CD8-positive, alpha-beta memory T cell (primary cell): ENCODE measurements at regions of chr6 and their contacts with region 1.

Region 1: DNA sequence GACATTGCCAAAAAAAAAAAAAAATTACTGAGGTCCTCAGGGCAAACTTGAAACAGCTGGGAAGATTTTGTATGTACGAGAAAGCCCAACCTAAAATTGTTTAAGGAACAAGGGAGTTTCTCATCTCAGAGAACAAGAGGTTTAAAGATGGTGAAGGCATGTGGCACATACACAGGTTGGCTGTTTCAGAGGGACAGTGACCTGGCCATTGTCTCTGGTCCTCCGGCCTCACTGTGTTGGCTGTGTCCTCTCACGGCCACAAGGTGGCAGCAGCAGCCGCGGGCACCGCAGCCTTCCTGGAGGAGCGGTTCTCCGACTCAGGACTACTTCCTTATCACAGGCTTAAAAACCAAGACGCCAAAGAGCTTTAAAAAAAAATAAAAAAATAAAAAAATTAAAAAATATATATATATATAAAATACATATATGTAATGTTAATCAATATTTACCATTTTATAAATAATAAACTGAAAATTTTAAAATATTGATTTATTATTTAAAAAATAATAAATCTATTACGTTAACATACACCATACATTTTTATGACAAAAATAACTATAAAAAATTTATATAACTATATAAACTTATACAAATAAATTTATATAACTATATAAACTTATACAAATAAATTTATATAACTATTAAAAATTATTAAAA is 52.8 kb downstream of the GTF2H5 start:
- DNase-seq: peak; percentile 60 to 84 (median 65)
- H3K4me3 ChIP-seq: no peak overlapping the region
- H3K4me3 Mint-ChIP-seq: no peak overlapping the region
- H3K27ac ChIP-seq: no peak overlapping the region
- H3K27ac Mint-ChIP-seq: no peak overlapping the region
- H3K4me1 ChIP-seq: no peaks in the 10 kb centered on the region
- H3K4me1 Mint-ChIP-seq: peaks cover 1 to 5% (median 4%) of the 10 kb centered on the region in 3 donors
- H3K27me3 ChIP-seq: no peaks in the 10 kb centered on the region
- H3K27me3 Mint-ChIP-seq: peaks cover 0 to 2% of the 10 kb centered on the region in 2 donors

Region 2: DNA sequence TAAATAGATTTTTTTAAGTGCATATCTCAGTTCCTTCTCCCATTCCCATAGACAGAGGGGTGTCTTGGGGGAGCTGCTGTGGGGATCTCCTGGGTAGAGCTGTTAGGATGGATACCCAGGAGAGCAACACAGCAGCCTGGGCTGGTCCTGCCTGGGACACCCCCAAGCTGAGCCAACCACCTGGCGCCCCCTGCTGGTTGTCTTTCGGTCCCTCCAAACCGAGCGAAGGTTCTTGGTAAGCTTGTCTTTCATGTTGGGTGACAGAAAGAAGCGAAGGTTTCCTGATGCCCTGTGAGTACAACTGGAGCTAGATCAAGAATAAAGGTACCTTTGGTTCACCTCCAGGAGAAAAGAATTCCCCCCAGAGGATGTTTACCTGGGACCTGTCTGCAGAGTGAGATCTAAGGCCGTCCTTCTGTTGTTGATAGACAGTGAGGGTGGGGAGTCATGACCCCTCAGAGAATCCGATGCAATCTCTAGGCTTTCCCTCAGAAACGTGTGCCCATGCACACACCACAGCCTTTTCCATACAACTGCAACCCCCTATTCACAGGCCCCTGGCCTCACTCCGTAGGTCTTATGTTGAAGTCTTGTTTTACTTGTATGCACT is 347.1 kb before region 1 on chr6:
- CTCF ChIA-PET with region 1: no interaction called
- POLR2A ChIA-PET with region 1: no interaction called
- DNase-seq: peak; percentile 57 to 81 (median 65)
- H3K4me3 ChIP-seq: no peak overlapping the region
- H3K4me3 Mint-ChIP-seq: no peak overlapping the region
- H3K27ac ChIP-seq: no peak overlapping the region
- H3K27ac Mint-ChIP-seq: peak overlapping the region in 2 of 8 donors; percentile 10 to 38
- H3K4me1 ChIP-seq: peaks cover 18% of the 10 kb centered on the region
- H3K4me1 Mint-ChIP-seq: peaks cover 2 to 6% (median 5%) of the 10 kb centered on the region in 3 donors
- H3K27me3 ChIP-seq: no peaks in the 10 kb centered on the region
- H3K27me3 Mint-ChIP-seq: no peaks in the 10 kb centered on the region

Region 3: DNA sequence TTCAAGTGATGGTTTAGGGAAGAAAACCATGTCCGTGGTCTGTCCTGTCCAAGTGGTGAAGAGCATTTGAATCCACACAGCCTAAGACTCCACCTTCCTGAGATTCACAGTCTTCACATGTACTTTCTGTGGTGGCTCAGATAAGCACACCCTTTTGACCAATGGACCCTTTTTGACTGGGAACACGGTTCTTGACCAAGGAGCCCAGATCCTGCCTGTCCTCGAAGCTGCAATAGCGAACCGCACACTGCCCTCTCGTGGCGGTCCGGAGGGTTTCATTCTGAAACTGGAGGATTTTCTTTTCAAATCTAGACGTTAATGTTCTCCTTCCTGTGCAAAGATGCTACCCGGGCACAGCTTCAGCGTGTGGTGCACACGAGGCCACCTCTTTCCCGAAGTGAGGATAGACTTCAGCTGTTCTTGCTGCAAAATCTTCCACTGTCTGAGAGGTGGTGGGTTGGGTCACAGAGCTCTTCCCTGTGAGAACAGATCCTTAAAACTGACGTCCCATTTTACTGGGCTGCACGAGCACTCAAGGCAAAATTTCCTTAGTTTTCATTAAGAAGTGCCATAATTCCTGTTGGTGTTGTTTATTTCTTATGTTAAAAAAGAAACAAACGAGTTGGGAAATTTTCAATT is 148.7 kb before region 1 on chr6:
- CTCF ChIA-PET with region 1: no interaction called
- POLR2A ChIA-PET with region 1: no interaction called
- DNase-seq: peak; percentile 28 to 68 (median 42)
- H3K4me3 ChIP-seq: no peak overlapping the region
- H3K4me3 Mint-ChIP-seq: no peak overlapping the region
- H3K27ac ChIP-seq: no peak overlapping the region
- H3K27ac Mint-ChIP-seq: peak overlapping the region in 3 of 8 donors; percentile 66 to 82 (median 71)
- H3K4me1 ChIP-seq: peaks cover 7% of the 10 kb centered on the region
- H3K4me1 Mint-ChIP-seq: peaks cover 12 to 19% (median 13%) of the 10 kb centered on the region in 3 donors
- H3K27me3 ChIP-seq: no peaks in the 10 kb centered on the region
- H3K27me3 Mint-ChIP-seq: peaks cover 0 to 2% of the 10 kb centered on the region in 2 donors

Region 4: DNA sequence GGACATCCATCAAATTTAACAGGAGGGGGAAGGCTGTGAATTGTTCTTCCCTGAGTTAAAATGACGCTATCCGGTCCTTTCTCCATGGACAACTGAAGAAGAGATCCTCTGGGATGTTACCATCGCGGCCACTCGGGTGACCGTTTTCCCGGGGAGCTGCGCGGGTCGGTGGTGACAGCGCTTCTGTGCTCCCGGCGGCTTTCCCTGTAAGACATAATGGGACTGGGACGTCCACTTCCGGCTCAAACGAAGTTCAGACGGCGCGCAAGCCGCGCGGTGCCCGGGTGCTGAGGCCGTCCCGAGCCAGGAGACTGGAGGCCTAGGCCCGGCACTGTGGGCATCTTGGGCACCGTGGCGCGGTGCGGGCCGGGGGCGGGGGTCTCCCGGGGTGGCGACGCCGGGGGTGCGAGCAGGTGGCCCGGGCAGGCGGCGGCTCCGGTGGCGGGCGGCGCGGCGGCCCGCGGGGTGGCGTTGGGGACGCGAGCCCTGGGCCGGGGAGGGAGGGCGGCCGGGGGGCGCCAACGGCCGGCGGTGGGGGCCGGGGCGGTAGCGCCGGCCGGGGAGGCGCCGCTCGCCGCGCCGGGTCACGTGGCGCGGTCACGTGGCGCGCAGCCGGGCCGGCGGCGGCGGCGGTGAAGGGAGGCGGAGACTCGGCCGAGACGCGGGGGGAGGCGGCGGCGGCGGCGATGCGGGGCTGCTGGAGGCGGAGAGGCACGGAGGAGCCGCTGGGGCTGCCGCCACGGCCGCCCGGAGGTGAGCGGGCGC is 10.8 kb after region 1 on chr6:
- CTCF ChIA-PET with region 1: interaction called, 10 read pairs
- POLR2A ChIA-PET with region 1: no interaction called
- DNase-seq: peak; percentile 70 to 84 (median 74)
- H3K4me3 ChIP-seq: peak overlapping the region; percentile 68
- H3K4me3 Mint-ChIP-seq: peak overlapping the region; percentile 84 to 98 (median 92)
- H3K27ac ChIP-seq: peak overlapping the region; percentile 61
- H3K27ac Mint-ChIP-seq: peak overlapping the region; percentile 83 to 98 (median 93)
- H3K4me1 ChIP-seq: peaks cover 24% of the 10 kb centered on the region
- H3K4me1 Mint-ChIP-seq: peaks cover 34 to 49% (median 42%) of the 10 kb centered on the region in 3 donors
- H3K27me3 ChIP-seq: no peaks in the 10 kb centered on the region
- H3K27me3 Mint-ChIP-seq: no peaks in the 10 kb centered on the region

Region 5: DNA sequence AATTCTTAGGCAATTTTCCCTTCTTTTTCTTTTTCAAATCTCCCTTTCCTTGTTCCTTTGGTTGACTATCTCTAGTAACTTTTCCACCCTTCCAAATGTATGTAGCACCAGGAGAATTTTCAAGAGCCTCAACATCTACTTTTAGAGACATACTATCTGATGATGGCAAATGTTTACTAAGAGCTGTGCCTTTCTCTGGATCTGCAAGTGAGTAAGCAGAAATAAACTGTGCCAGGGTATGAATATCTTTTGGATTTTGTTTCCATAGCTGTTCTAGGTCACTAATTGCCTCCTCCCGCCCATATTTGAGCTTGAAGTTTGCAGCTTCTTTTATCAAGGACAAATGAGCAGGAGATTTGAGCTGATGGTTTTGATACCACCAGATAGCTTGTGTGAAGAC is 16.7 kb after region 1 on chr6:
- CTCF ChIA-PET with region 1: interaction called, 10 read pairs
- POLR2A ChIA-PET with region 1: no interaction called
- DNase-seq: no peak
- H3K4me3 ChIP-seq: no peak overlapping the region
- H3K4me3 Mint-ChIP-seq: peak overlapping the region in 1 of 7 donors; percentile 19
- H3K27ac ChIP-seq: no peak overlapping the region
- H3K27ac Mint-ChIP-seq: peak overlapping the region in 5 of 8 donors; percentile 5 to 80 (median 35)
- H3K4me1 ChIP-seq: peaks cover 25% of the 10 kb centered on the region
- H3K4me1 Mint-ChIP-seq: peaks cover 45 to 62% (median 57%) of the 10 kb centered on the region in 3 donors
- H3K27me3 ChIP-seq: no peaks in the 10 kb centered on the region
- H3K27me3 Mint-ChIP-seq: no peaks in the 10 kb centered on the region

Region 6: DNA sequence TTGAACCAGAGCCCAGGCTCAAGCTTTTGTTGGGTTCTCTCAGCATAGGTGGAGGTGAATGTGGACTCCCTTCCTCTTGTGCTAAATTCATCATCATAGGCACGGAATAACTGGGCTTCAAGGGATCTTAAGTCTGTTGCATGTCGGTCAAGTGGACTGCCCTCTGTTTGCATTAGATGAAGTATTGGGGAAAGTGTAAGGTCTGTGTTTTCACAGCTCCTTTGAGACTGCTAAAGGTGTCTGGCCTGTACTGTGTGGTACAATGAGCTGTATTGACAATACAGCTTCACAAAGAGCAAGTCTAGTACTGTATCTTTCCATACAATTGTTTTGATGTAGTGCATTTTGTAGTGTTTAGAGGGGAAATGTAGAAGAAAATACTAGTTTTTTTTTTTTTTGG is 57.1 kb after region 1 on chr6:
- CTCF ChIA-PET with region 1: no interaction called
- POLR2A ChIA-PET with region 1: no interaction called
- DNase-seq: no peak
- H3K4me3 ChIP-seq: no peak overlapping the region
- H3K4me3 Mint-ChIP-seq: no peak overlapping the region
- H3K27ac ChIP-seq: no peak overlapping the region
- H3K27ac Mint-ChIP-seq: peak overlapping the region in 2 of 8 donors; percentile 17 to 21
- H3K4me1 ChIP-seq: peaks cover 6% of the 10 kb centered on the region
- H3K4me1 Mint-ChIP-seq: peaks cover 23 to 27% (median 23%) of the 10 kb centered on the region in 3 donors
- H3K27me3 ChIP-seq: no peaks in the 10 kb centered on the region
- H3K27me3 Mint-ChIP-seq: no peaks in the 10 kb centered on the region

Region 7: GRCh38 chr6:158387036-158387435 is 166.1 kb after region 1 on chr6:
- CTCF ChIA-PET with region 1: interaction called, 16 read pairs
- POLR2A ChIA-PET with region 1: no interaction called
- DNase-seq: peak in 2 of 5 donors; percentile 2 to 4
- H3K4me3 ChIP-seq: no peak overlapping the region
- H3K4me3 Mint-ChIP-seq: no peak overlapping the region
- H3K27ac ChIP-seq: no peak overlapping the region
- H3K27ac Mint-ChIP-seq: no peak overlapping the region
- H3K4me1 ChIP-seq: no peaks in the 10 kb centered on the region
- H3K4me1 Mint-ChIP-seq: peaks cover 16 to 26% (median 20%) of the 10 kb centered on the region in 3 donors
- H3K27me3 ChIP-seq: no peaks in the 10 kb centered on the region
- H3K27me3 Mint-ChIP-seq: peaks cover 0 to 1% of the 10 kb centered on the region in 2 donors

Region 8: GRCh38 chr6:158518191-158519127 is 297.5 kb after region 1 on chr6:
- CTCF ChIA-PET with region 1: interaction called, 17 read pairs
- POLR2A ChIA-PET with region 1: no interaction called
- DNase-seq: peak; percentile 10 to 63 (median 26)
- H3K4me3 ChIP-seq: peak overlapping the region; percentile 46
- H3K4me3 Mint-ChIP-seq: peak overlapping the region; percentile 76 to 90 (median 85)
- H3K27ac ChIP-seq: no peak overlapping the region
- H3K27ac Mint-ChIP-seq: peak overlapping the region; percentile 8 to 91 (median 70)
- H3K4me1 ChIP-seq: peaks cover 25% of the 10 kb centered on the region
- H3K4me1 Mint-ChIP-seq: peaks cover 37 to 45% (median 45%) of the 10 kb centered on the region in 3 donors
- H3K27me3 ChIP-seq: peaks cover 4% of the 10 kb centered on the region
- H3K27me3 Mint-ChIP-seq: peaks cover 9 to 14% of the 10 kb centered on the region in 2 donors